SK-N-SH (cell line): ENCODE measurements at regions of chr1 and their contacts with region 1.

Region 1: GRCh38 chr1:200979574-200980451 is 43.7 kb downstream of the KIF21B start:
- DNase-seq: peak; percentile 77
- H3K4me3 ChIP-seq: peak overlapping the region in 1 of 2 experiments; percentile 52; a peak in 1 of 4 replicates
- H3K27ac ChIP-seq: no peak overlapping the region
- H3K4me1 ChIP-seq: peaks cover 0 to 3% of the 10 kb centered on the region in 2 experiments; a peak in 1 of 4 replicates
- H3K27me3 ChIP-seq: no peaks in the 10 kb centered on the region
- CTCF ChIP-seq: peak; percentile 59
- EP300 ChIP-seq: no peak
- RAD21 ChIP-seq: peak; percentile 41

Region 2: GRCh38 chr1:201009962-201010645 is 30.3 kb after region 1 on chr1:
- CTCF ChIA-PET with region 1: interaction called, 10 read pairs
- POLR2A ChIA-PET with region 1: no interaction called
- DNase-seq: no peak
- H3K4me3 ChIP-seq: no peak overlapping the region
- H3K27ac ChIP-seq: no peak overlapping the region
- H3K4me1 ChIP-seq: peaks cover 0 to 16% of the 10 kb centered on the region in 2 experiments; a peak in 2 of 4 replicates
- H3K27me3 ChIP-seq: no peaks in the 10 kb centered on the region
- CTCF ChIP-seq: no peak
- EP300 ChIP-seq: no peak
- RAD21 ChIP-seq: no peak

Region 3: GRCh38 chr1:201032408-201032807 is 52.6 kb after region 1 on chr1:
- CTCF ChIA-PET with region 1: no interaction called
- POLR2A ChIA-PET with region 1: no interaction called
- DNase-seq: no peak
- H3K4me3 ChIP-seq: no peak overlapping the region
- H3K27ac ChIP-seq: no peak overlapping the region
- H3K4me1 ChIP-seq: no peaks in the 10 kb centered on the region
- H3K27me3 ChIP-seq: peaks cover 12% of the 10 kb centered on the region
- CTCF ChIP-seq: no peak
- EP300 ChIP-seq: no peak
- RAD21 ChIP-seq: no peak

Region 4: GRCh38 chr1:201042779-201043461 is 63.1 kb after region 1 on chr1:
- CTCF ChIA-PET with region 1: interaction called, 33 read pairs
- POLR2A ChIA-PET with region 1: no interaction called
- DNase-seq: peak; percentile 76
- H3K4me3 ChIP-seq: peak overlapping the region in 1 of 2 experiments; percentile 7; a peak in 1 of 4 replicates
- H3K27ac ChIP-seq: no peak overlapping the region
- H3K4me1 ChIP-seq: peaks cover 0 to 7% of the 10 kb centered on the region in 2 experiments; a peak in 1 of 4 replicates
- H3K27me3 ChIP-seq: peaks cover 19% of the 10 kb centered on the region; the same call in 1 of the 2 replicates
- CTCF ChIP-seq: peak; percentile 87
- EP300 ChIP-seq: no peak
- RAD21 ChIP-seq: peak; percentile 92